Stomach (tissue), 19 donors: ENCODE measurements at regions of chr15 and their contacts with region 1.

Region 1: GRCh38 chr15:92226014-92226612 is 167.6 kb upstream of the ST8SIA2 start:
- DNase-seq: peak in 1 of 2 donors; percentile 46
- H3K4me3 ChIP-seq: no peak overlapping the region
- H3K27ac ChIP-seq: no peak overlapping the region
- H3K4me1 ChIP-seq: no peaks in the 10 kb centered on the region
- H3K27me3 ChIP-seq: no peaks in the 10 kb centered on the region
- CTCF ChIP-seq: peak in 4 of 7 experiments; percentile 24 to 50 (median 40)
- EP300 ChIP-seq: no peak
- POLR2A ChIP-seq: no peak

Region 2: DNA sequence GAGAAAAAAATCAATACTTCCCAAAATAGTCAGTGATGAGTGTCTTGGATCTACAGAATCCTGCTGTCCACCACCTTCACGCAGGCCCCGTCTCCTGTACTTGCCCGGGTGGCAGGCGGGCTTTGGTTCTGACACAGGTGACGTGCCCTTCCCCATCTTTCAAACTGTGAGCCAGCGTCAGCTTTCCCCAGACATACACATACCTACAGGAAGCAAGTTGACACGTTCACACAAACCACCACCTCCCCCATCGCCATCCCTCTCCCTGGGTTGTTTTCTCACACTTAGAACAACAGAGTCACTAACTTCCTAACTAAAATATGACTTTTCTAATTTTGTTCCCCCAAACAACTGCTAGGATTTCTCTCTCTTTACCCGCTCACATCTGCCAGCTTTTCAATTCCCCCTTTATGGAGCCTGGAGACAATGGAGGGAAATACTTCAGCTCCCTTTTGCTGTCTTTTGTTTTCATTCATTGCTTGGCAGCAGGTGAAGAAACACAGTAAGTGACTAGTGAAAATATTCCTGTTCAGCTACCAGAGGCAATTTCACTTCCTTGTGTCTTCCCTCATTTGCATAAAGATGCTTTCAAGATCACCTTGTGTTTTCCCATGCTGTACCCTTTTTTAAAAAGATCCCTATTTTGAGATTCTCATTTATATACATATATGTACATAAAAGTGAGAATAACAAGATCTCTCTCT is 124.3 kb before region 1 on chr15:
- intact Hi-C with region 1: loop called (anchors 5 kb)
- DNase-seq: no peak
- H3K4me3 ChIP-seq: no peak overlapping the region
- H3K27ac ChIP-seq: no peak overlapping the region
- H3K4me1 ChIP-seq: peaks cover 0 to 17% (median 8%) of the 10 kb centered on the region in 4 donors
- H3K27me3 ChIP-seq: no peaks in the 10 kb centered on the region
- CTCF ChIP-seq: no peak
- EP300 ChIP-seq: no peak
- POLR2A ChIP-seq: no peak